HEK293T (cell line): ENCODE measurements at regions of chr15 and their contacts with region 1.

Region 1: DNA sequence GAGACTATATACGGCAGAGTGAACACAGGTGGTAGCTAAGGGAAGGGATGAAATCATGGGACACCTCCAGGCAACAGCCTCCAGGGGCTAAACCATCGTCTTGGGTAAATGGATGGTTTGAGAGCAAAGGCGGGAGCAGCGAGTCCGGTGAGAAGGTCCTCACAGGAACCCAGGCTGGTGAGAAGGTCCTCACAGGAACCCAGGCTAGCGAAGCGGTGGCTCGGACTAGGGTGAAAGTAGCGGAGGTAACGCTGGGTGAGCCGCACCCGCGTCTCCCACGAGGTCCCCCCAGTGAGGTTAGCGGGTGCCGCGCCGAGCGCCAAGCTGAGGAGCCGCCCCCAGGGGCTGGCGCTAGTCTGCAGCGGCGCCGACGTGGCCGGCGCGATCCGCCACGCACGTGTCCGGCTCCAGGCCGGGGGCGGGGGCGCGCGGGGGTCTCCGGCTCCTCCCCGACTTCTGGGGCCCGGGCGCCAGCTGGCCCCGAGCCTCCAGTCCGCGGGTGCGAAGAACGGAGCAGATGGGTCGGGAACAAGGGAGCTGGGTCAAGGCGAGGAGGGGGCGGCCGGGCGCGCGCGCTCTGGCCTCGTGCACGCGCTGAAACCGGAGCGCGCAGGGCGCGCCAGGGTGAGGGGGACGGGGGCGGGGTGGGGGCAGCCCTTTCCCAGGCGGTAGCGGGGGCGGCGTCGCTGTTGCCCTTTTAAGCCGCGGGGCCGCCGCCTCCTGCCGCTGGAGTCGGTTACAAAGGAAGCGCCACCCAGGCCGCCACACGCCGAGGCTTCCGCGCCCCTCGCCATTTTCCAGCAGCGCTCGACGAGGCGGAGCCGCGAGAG is at the start of gene UBE2Q2:
- DNase-seq: peak; percentile 80

Region 2: DNA sequence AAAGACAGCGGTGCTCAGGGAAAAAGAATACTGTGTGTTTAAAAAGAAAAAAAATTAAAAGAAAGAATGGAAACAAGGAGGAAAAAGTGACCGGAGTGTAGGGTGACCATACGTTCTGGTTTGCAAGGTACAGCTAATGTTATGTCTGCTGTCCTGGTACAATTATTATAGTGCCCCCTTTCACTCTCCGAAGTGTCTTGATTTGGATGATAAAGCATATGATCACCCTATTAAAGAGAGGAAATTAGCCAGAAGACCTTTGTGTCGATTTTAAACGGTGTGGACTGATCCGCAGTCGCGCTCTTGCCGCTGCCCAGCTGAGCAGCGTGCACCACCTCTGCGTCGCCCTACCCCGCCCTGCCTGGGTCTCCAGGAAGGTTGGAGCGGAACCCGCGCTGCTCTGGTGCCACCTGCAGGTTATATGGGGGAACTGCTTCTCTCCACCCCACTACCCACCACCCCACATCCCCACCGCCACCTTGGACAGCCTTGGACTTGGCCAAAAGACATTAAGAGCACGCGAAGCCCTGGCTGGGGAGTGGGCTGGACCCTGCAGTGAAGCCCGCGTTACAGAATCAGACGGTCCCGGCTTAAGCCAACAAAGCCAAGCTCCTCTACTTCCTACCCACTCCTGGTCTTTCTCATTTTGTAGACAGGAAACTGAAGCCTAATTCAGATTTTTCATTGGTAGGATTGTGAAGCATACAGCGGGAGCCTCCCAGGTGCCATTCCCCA is 40.9 kb before region 1 on chr15:
- CTCF ChIA-PET with region 1: no interaction called
- POLR2A ChIA-PET with region 1: no interaction called
- DNase-seq: peak; percentile 95

Region 3: DNA sequence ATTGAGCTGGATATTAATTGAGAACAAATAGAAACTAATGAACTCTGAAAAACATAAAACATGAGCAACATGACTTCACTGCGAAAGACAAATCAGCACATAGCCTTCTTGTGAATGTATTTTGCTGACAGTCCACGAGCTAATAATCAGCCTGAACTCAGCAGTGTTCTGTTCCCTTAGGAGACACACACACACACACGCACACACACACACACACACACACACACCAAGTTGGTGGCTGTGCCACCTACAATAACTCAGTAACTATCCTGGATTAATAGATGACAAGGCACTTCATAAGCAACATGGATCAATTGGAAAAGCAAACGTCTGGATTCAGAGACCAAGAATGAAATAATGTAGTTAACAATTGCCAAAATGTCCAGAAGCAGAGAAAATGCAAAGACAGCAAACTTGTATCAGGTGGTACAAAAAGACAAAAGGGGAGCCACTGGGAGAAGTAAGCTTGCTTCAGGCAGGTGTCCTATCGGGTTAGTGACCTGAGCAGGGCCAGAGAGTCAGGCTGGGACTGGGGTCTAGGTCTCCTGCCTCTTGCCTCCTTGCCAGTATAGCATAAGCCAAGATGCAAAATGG is 20.2 kb before region 1 on chr15:
- CTCF ChIA-PET with region 1: no interaction called
- POLR2A ChIA-PET with region 1: interaction called, 10 read pairs
- DNase-seq: no peak

Region 4: DNA sequence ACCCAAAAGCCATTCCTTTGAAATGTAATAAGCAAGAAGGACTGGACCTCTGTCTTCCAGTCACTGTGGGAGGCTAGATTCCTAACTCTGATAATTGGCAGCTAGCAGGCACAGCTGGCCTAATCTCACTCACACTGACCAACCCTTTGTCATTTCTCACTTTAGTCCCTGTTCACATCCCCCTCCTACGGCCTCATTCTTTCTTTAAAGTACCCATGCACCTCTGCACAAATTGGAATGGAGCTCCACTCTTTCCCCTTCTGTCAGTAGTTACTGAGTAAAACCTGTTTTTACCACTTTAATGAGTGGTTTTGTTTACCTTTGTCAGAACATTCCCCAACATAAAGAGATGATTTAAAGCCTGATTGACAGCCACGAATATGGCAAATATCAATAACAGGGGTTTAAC is 11.4 kb before region 1 on chr15:
- CTCF ChIA-PET with region 1: interaction called, 5 read pairs
- POLR2A ChIA-PET with region 1: interaction called, 10 read pairs
- DNase-seq: no peak

Region 5: GRCh38 chr15:75857886-75858285 is 14.9 kb after region 1 on chr15:
- CTCF ChIA-PET with region 1: interaction called, 4 read pairs
- POLR2A ChIA-PET with region 1: interaction called, 10 read pairs
- DNase-seq: no peak

Region 6: GRCh38 chr15:75903331-75904239 is 60.6 kb after region 1 on chr15 and contains the start of gene FBXO22:
- CTCF ChIA-PET with region 1: no interaction called
- POLR2A ChIA-PET with region 1: interaction called, 10 read pairs
- DNase-seq: peak; percentile 93

Region 7: DNA sequence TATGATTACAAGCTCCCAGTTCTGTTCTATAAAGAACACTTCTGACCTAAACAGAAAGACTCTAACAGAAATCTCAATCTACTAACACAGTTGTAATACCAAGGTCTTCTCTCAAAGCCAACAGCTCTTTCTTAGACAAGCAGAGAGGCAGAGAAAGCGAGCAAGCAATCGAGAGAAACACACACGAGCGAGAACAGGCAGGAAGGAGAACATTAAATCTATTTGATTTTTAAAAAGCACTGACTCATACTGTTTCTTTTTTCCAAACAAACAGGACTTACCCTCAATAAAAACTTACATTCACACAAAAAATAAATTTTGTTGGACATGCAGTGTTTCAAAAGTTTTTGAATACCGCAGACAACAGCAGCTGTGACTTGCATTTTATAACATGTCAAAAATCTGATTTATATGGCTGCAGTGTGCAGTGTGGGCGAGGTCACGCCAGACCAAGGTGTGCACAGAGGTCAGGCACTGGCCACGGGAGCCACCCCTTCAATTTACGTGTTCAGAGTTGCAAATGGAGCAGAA is 169.1 kb after region 1 on chr15 and contains the start of gene NRG4:
- CTCF ChIA-PET with region 1: no interaction called
- POLR2A ChIA-PET with region 1: no interaction called
- DNase-seq: peak; percentile 33